GM13977 (cell line): ENCODE measurements at regions of chr4 and their contacts with region 1.

Region 1: DNA sequence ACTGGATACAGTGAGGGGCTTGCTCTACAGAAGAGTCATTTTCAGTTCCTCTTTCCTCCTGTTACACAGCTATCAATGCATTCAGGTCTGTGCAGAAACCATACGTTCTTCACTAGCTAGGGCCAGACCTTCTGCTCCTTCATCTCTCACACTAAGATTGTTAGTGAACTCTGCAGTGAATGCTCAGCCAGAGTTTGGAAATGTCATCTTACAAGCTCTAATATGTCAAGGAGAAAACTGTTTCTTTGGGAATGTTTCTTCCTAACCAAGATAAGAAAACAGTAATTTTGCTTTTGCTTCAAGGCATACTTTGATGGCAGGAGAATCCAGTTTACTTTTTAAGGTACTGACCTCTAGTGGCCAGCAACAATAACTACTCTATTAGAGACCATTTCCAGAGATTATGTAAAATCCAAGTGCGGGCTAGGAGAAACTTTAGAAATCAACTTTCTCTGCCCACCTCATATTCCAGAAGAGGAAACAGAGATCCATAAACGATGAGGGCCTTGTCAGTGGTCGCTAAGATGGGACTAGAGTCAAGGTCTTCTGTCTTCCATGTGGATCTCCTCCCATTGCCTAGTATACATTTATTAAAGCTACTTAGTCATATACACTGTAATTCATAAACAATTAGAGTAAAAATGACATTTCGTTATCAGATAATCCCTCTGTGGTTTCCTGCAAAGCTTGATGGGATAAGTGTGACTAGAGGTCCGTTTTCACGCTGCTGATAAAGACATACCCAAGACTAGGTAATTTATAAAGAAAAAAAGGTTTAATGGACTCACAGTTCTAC is 12.1 kb upstream of the CC2D2A start:
- DNase-seq: peak; percentile 32
- CTCF ChIP-seq: peak; percentile 71

Region 2: GRCh38 chr4:15231265-15232091 is 226.1 kb before region 1 on chr4:
- in situ Hi-C with region 1: loop called (anchors 25 kb)
- DNase-seq: peak; percentile 60
- CTCF ChIP-seq: peak; percentile 72